Activated CD4-positive, alpha-beta T cell treated with anti-CD3 and anti-CD28 coated beads for 36 hours (primary cell): ENCODE measurements at regions of chrX and their contacts with region 1.

Region 1: GRCh38 chrX:119502727-119503483 is 34.7 kb downstream of the SLC25A5 start:
- DNase-seq: peak; percentile 49
- ATAC-seq: peak; percentile 79
- H3K4me3 Mint-ChIP-seq: no peak overlapping the region
- H3K27ac Mint-ChIP-seq: peak overlapping the region; percentile 55
- H3K4me1 Mint-ChIP-seq: peaks cover 17% of the 10 kb centered on the region
- H3K27me3 Mint-ChIP-seq: no peaks in the 10 kb centered on the region

Region 2: GRCh38 chrX:119359618-119360382 is 143.1 kb before region 1 on chrX:
- CTCF ChIA-PET with region 1: no interaction called
- POLR2A ChIA-PET with region 1: no interaction called
- intact Hi-C with region 1: no loop called
- DNase-seq: no peak
- ATAC-seq: no peak
- H3K4me3 Mint-ChIP-seq: no peak overlapping the region
- H3K27ac Mint-ChIP-seq: no peak overlapping the region
- H3K4me1 Mint-ChIP-seq: no peaks in the 10 kb centered on the region
- H3K27me3 Mint-ChIP-seq: no peaks in the 10 kb centered on the region

Region 3: GRCh38 chrX:119482481-119483480 is 20.1 kb before region 1 on chrX:
- CTCF ChIA-PET with region 1: interaction called, 10 read pairs
- POLR2A ChIA-PET with region 1: no interaction called
- intact Hi-C with region 1: no loop called
- DNase-seq: peak; percentile 82
- ATAC-seq: peak; percentile 93
- H3K4me3 Mint-ChIP-seq: peak overlapping the region; percentile 55
- H3K27ac Mint-ChIP-seq: peak overlapping the region; percentile 19
- H3K4me1 Mint-ChIP-seq: peaks cover 7% of the 10 kb centered on the region
- H3K27me3 Mint-ChIP-seq: no peaks in the 10 kb centered on the region